Mammary epithelial cell (primary cell): ENCODE measurements at regions of chr6 and their contacts with region 1.

Region 1: GRCh38 chr6:163413345-163414116 is 987 bp upstream of the QKI start:
- DNase-seq: peak; percentile 84
- H3K4me3 ChIP-seq: peak overlapping the region; percentile 72 to 90 (median 85)
- H3K27ac ChIP-seq: peak overlapping the region; percentile 77
- H3K4me1 ChIP-seq: no peaks in the 10 kb centered on the region
- H3K27me3 ChIP-seq: no peaks in the 10 kb centered on the region
- CTCF ChIP-seq: no peak

Region 2: GRCh38 chr6:162856885-162857284 is 556.6 kb before region 1 on chr6:
- CTCF ChIA-PET with region 1: no interaction called
- dilution Hi-C with region 1: no loop called
- in situ Hi-C with region 1: no loop called
- intact Hi-C with region 1: loop called (anchors 5 kb)
- DNase-seq: peak; percentile 27
- H3K4me3 ChIP-seq: no peak overlapping the region
- H3K27ac ChIP-seq: no peak overlapping the region
- H3K4me1 ChIP-seq: no peaks in the 10 kb centered on the region
- H3K27me3 ChIP-seq: no peaks in the 10 kb centered on the region
- CTCF ChIP-seq: peak; percentile 26 to 68

Region 3: GRCh38 chr6:163260111-163260895 is 153.2 kb before region 1 on chr6:
- CTCF ChIA-PET with region 1: no interaction called
- dilution Hi-C with region 1: no loop called
- in situ Hi-C with region 1: no loop called
- intact Hi-C with region 1: loop called (anchors 10 kb)
- DNase-seq: no peak
- H3K4me3 ChIP-seq: no peak overlapping the region
- H3K27ac ChIP-seq: no peak overlapping the region
- H3K4me1 ChIP-seq: no peaks in the 10 kb centered on the region
- H3K27me3 ChIP-seq: no peaks in the 10 kb centered on the region
- CTCF ChIP-seq: no peak

Region 4: DNA sequence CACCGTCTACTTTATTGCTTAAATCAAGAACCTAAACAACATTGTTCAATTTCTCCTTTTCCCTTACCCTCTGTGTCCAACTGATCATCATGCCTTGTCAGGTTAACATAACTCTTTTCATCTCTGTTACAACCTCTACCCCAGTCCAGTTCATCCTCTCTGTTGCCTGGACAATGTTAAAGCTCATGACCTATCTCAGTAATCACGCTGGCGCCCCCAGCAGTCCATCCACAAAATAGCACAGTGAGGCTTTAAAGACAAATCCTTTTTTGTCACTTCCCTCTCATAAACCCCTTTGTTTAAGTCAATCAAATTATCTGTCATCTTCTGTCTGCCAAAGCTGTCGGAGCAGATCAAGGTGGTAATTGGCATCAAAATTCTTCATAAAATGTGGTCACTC is 141.1 kb after region 1 on chr6:
- CTCF ChIA-PET with region 1: interaction called, 6 read pairs
- dilution Hi-C with region 1: no loop called
- in situ Hi-C with region 1: no loop called
- intact Hi-C with region 1: loop called (anchors 1 kb)
- DNase-seq: peak; percentile 21
- H3K4me3 ChIP-seq: no peak overlapping the region
- H3K27ac ChIP-seq: no peak overlapping the region
- H3K4me1 ChIP-seq: no peaks in the 10 kb centered on the region
- H3K27me3 ChIP-seq: no peaks in the 10 kb centered on the region
- CTCF ChIP-seq: peak; percentile 70 to 71

Region 5: DNA sequence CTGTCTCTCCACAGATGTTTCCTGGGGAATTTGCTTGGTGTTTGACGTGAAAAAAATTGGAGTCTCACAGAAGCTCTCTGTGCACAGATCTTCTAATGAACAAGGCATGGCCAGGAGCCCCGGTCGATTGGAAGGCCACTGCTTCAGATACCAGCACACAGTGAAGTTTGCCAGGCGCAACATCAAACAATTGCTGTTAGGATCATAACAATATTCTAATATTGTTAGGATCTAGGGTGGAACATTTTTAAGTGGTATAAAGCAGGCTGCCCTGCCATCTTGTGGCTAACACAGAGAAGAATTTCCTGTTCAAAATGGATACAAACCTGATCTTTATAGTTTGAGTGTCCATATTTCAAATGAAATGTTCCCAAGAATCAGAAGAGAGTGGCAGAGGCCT is 1831.8 kb after region 1 on chr6:
- CTCF ChIA-PET with region 1: no interaction called
- dilution Hi-C with region 1: no loop called
- in situ Hi-C with region 1: no loop called
- intact Hi-C with region 1: loop called (anchors 5 kb)
- DNase-seq: no peak
- H3K4me3 ChIP-seq: no peak overlapping the region
- H3K27ac ChIP-seq: no peak overlapping the region
- H3K4me1 ChIP-seq: no peaks in the 10 kb centered on the region
- H3K27me3 ChIP-seq: no peaks in the 10 kb centered on the region
- CTCF ChIP-seq: peak; percentile 11 to 42